ENCODE measurements at regions of chr5 and their contacts with region 1.

Region 1: DNA sequence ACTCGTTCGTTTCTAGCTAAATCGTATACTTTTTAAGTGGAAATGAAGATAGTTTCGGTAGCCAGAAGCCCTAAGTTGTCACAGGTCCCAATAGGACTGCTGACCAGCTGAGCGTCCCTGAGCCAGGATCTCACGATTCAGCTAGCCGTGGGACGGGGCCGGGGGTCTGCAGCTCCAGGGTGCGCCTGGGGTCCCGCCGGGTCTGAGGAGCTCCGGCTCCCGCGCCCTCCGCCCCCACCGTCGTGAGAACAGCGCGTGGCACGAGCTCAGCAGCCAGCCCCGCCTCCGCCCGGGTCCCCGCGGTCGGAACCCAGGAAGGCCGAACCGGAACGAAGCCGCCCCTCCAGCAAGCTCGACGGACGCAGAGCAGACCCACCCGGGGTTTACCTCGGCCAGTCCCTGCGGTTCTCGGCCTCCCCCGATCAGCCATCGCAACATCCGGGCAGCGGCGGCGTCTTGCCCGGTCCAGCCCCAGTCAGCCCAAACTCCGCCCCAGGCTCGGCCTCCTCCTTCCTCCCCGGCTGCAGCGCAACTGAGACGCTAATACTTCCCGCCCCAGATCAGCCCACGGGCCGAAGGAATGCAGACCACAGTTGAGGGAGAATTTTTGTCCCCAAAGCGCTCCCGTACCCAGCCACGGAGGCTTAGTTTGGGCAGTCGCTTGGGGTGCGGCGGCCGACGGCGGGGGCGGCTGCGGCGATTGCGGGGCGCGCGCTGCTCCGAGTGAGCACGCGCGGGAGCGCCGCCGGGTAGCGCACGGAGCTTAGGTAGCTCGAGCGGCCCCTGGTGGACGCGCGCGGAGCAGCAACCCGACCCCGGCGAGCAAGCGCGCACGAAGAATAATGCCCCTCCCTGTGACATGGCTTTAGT is at the start of gene WDR41:
- DNase-seq: peak; percentile 93
- ATAC-seq: peak; percentile 97 to 98
- total RNA-seq, gene WDR41: 30.2 to 40.3 TPM

Region 2: GRCh38 chr5:77076961-77077823 is 414.8 kb before region 1 on chr5:
- intact Hi-C with region 1: loop called in 1 of 2 experiments (anchors 5 kb)
- DNase-seq: peak; percentile 78
- ATAC-seq: peak; percentile 91 to 96

Region 3: GRCh38 chr5:77120706-77121105 is 371.3 kb before region 1 on chr5:
- intact Hi-C with region 1: no loop called
- DNase-seq: no peak
- ATAC-seq: no peak

Region 4: DNA sequence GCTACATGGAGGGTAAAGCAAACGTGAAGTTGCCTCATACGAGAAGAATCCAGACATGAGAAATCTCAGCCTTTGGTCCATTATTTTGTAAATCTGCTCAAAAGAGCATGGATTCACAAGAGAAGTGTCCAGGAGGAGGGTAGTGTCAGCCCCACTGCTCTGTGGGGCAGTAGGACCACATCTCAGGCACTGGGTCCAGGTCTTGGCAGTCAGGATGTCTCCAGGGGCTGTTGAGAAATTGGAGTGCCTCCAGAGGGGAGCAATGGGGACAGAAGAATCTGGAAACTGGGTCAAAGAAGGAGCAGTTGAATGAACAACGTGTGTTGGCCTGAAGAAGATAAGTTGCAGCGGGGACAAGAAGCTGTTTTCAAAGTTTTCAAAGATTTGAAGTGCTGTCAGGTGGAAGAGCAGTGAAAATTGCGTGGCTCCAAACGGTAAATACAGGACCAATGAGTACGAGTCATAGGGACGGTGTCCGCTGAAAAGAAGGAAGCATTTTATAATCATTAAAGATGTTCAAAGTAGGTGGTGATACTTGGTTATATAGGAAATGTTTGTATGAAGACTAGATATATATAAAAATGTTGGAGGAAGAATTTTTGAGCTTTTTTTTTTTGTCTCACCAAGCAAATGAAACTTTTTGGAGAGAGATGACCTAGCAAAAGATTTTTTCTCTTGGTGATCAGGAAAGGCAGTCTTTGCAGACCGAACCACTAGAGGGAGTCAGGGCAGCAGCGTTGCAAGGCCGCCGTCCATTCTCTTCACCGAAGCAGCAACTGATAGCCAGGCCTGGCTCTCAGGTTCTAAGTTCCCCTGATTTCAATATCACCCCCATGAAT is 347.8 kb before region 1 on chr5:
- intact Hi-C with region 1: loop called in 1 of 2 experiments (anchors 5 kb)
- DNase-seq: peak; percentile 72
- ATAC-seq: peak; percentile 80 to 87

Region 5: DNA sequence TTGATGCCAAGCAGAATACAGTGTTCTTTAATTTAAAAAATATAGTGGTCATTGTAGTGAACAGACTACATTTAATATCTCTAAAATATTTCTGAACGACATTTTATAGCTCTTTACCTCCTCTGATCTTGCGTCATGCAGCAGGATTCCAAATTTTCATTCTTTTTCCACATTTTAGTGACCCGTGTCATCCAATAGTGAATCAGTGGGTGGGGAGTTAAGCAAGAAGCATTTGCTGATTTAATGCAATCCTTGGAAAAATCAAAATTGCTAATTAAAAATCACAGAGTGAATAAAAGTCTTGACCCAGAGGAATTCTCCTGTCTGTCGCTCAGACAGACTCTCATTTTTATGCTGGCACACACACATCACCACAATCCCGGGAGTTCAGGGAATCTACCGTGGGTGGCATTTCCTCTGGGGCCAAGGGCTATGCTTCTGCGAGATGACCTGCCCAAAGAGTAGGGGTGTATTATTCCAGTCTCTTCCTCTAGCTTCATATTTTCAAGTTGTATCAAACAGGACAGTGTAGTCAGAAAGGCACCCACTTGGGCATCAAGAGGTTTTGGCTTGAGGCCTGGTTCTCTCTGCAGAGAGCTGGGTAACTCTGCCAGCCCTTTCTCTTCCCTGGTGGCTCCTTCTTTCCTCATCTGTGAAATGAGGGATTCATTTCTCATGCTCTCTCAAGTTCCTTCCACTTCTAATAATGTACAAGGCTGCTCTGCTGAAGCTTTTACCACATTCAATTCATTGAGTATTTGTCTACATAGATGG is 171.3 kb after region 1 on chr5:
- intact Hi-C with region 1: no loop called
- DNase-seq: no peak
- ATAC-seq: peak; percentile 39 to 68

Measured in left cardiac atrium (tissue), 4 donors.